HEK293T (cell line): ENCODE measurements at regions of chr21 and their contacts with region 1.

Region 1: GRCh38 chr21:41777951-41778874 is 11.4 kb upstream of the RIPK4 start:
- DNase-seq: peak; percentile 83

Region 2: GRCh38 chr21:41152147-41152546 is 626.1 kb before region 1 on chr21:
- CTCF ChIA-PET with region 1: interaction called, 10 read pairs
- POLR2A ChIA-PET with region 1: no interaction called
- DNase-seq: no peak

Region 3: DNA sequence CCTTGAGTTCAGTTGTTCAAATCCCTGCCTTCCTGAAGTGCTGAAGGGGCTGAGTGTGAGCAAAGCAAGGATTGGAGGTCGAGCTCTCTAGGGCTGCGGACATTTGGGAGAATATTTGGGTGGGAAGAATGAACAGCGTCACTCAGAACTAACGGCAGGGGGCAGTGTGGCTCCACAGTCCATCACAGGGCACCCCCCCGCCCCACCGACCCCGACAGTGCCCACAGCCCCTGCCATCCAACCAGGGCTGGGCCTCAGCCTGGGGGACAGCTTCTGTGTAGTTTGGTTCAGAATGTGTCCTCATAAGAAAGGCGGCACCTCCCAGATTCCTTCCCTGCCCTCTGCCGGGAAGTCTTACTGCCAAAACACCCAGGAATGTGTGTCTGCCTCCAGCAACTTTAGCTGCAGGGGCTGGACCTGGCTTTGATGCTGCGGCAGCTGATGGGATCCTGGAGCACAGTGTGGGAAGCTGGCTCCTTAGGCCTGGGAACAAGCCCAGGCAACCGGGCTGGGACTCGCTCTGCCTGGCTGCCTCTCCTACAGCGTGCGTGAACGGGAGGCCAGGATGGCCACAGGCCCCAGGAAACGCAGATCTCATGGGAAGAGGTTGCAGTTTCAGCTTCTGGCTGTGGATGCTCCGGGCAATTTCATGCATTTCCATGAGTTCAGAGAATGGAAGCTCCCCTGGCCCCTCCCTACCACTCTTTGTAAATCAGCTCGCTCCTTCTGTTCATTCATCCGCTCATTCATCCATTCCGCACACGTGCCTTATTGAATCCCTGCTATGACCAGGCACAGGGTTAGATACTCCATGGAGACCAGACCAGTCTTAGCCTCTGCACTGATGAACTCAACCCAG is 165.3 kb before region 1 on chr21:
- CTCF ChIA-PET with region 1: interaction called, 29 read pairs
- POLR2A ChIA-PET with region 1: no interaction called
- DNase-seq: peak; percentile 78